Activated CD4-positive, alpha-beta T cell treated with anti-CD3 and anti-CD28 coated beads, Interleukin-2, amount 10 ng/mL, durations not matched to agents 24 days and 14 days (primary cell): ENCODE measurements at regions of chr14 and their contacts with region 1.

Region 1: GRCh38 chr14:102139248-102140026 is at the start of gene WDR20:
- DNase-seq: peak; percentile 100
- H3K4me3 Mint-ChIP-seq: peak within 1 kb of the TSS; percentile 97
- H3K27ac Mint-ChIP-seq: peak within 1 kb of the TSS; percentile 95
- H3K4me1 Mint-ChIP-seq: peaks cover 21% of the 10 kb centered on the region
- H3K27me3 Mint-ChIP-seq: no peaks in the 10 kb centered on the region
- total RNA-seq, gene WDR20: 30.4 and 31.0 TPM in 2 replicates

Region 2: DNA sequence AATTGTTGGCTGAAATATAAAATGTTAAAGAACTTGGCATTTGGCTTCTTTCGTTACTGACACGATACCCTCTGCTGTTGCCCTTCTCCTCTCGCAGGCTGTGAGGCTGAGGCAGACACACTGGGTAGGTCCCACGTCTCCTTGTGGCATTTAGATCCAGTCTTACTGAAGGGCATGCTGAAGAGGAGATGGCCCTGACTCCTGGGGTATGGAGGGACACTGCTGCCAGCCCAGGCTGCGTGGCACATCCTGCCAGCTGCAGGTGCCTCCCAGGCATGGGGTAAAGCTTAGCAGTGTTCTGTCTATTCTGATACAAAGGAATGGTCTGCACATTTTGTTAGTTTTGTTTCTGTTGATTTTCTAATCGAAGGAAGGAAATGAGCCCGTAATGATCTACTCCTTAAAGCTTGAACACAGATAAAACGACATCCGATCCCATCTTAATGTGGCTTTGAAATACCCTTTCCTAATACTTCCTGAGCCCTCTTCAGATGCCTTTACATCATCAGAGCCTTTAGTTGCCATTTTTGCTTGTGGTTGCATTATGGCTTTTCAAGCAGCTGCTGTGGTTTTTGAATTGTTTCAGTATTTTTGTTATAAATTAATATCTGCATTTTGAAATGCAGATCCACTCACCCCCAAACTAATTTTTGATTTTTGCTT is 61.4 kb after region 1 on chr14:
- intact Hi-C with region 1: loop called (anchors 5 kb)
- DNase-seq: no peak
- H3K4me3 Mint-ChIP-seq: peak overlapping the region; percentile 2
- H3K27ac Mint-ChIP-seq: peak overlapping the region; percentile 74
- H3K4me1 Mint-ChIP-seq: peaks cover 40% of the 10 kb centered on the region
- H3K27me3 Mint-ChIP-seq: no peaks in the 10 kb centered on the region